Activated CD4-positive, alpha-beta T cell treated with anti-CD3 and anti-CD28 coated beads, Interleukin-2, amount 10 ng/mL, durations not matched to agents 7 days and 5 days (primary cell): ENCODE measurements at regions of chr14 and their contacts with region 1.

Region 1: DNA sequence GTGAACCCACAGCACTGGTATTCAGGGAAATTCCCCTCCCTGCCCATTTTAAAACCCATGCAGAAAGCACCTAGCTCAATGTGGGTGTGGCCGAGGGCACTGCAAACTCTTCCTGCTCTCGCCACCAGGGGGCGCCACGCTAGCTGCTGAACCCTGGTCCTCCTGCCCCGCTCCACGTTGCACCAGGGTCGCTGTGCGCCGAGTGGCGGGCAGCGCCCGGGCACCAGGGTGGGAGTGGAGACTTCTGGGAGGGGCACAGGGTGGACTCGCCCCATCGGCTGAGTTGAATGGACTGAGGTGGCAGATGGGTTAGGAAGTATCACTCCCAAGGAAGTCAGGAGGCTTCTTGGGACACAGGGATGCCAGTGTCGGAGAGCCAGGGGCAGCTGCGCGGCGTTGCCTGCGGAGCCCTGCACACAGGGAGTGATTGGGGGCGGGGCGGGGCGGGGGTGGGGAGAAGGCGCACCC is 48.1 kb upstream of the BCL11B start:
- DNase-seq: peak; percentile 77
- H3K4me3 Mint-ChIP-seq: peak overlapping the region; percentile 38
- H3K27ac Mint-ChIP-seq: no peak overlapping the region
- H3K4me1 Mint-ChIP-seq: peaks cover 9% of the 10 kb centered on the region
- H3K27me3 Mint-ChIP-seq: no peaks in the 10 kb centered on the region

Region 2: GRCh38 chr14:99342204-99342603 is 22.1 kb after region 1 on chr14:
- CTCF ChIA-PET with region 1: interaction called, 11 read pairs
- POLR2A ChIA-PET with region 1: no interaction called
- DNase-seq: no peak
- H3K4me3 Mint-ChIP-seq: no peak overlapping the region
- H3K27ac Mint-ChIP-seq: no peak overlapping the region
- H3K4me1 Mint-ChIP-seq: peaks cover 2% of the 10 kb centered on the region
- H3K27me3 Mint-ChIP-seq: peaks cover 19% of the 10 kb centered on the region

Region 3: GRCh38 chr14:99415496-99416281 is 95.5 kb after region 1 on chr14:
- CTCF ChIA-PET with region 1: interaction called, 15 read pairs
- POLR2A ChIA-PET with region 1: no interaction called
- DNase-seq: peak; percentile 81
- H3K4me3 Mint-ChIP-seq: no peak overlapping the region
- H3K27ac Mint-ChIP-seq: no peak overlapping the region
- H3K4me1 Mint-ChIP-seq: peaks cover 27% of the 10 kb centered on the region
- H3K27me3 Mint-ChIP-seq: no peaks in the 10 kb centered on the region

Region 4: DNA sequence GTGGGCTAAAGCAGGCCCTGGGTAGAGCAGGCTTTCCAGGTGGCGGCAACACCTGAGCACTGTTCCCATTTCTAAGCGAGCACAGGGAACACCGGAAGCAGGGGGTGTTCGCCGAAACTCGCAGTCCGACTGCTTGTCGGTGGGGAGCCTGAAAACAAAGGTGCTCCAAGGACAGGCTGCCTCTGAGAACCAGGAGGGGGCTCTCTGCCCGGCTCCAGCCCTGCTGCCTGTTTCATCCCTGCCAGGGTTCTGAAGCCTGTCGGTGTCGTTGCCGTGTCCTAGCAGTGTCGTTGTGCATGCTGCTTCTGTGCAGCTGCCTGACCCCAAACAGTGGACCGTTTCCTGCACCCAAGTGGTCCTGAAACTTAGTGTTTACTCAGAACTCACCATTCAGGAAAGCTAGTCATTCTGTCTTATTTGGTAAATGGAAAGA is 182.9 kb after region 1 on chr14:
- CTCF ChIA-PET with region 1: no interaction called
- POLR2A ChIA-PET with region 1: no interaction called
- DNase-seq: no peak
- H3K4me3 Mint-ChIP-seq: no peak overlapping the region
- H3K27ac Mint-ChIP-seq: no peak overlapping the region
- H3K4me1 Mint-ChIP-seq: peaks cover 2% of the 10 kb centered on the region
- H3K27me3 Mint-ChIP-seq: no peaks in the 10 kb centered on the region